Posterior vena cava (tissue), 2 donors: ENCODE measurements at regions of chr1 and their contacts with region 1.

Region 1: GRCh38 chr1:17236779-17237560 is 11.9 kb upstream of the PADI3 start:
- DNase-seq: peak; percentile 96

Region 2: DNA sequence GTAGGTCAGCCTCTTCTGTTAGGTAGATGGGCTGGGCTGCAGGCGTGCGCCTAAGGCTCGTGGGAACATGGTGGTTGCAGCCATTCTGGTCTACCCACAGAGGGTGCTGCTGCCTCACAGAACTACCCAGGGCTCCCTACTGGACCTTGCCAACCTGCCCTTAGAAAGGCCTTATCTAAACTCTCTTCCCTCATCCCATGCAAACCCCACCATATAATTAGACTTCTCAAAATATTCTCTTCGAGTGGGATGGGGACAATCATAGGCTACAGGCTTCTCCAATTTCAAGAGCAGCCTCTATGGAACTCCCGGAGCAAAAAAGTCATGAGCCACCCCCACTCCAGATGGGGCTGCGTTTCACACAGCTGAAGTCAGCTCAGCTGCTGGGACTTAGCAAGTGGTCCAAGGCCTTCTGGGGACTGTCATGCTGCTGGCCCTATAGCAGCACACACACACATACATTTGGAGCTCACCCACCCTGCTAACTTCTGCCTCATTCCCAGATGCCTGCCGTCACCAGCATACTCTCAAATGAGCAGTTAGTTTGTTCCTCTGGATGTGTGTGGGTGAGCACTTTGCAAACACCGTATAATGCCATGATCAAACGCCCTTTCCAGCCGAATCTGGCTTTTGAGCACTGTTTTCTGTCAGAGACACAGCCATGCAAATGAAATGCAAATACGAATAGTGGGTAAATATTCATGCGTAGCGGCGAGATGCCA is 177.1 kb before region 1 on chr1:
- intact Hi-C with region 1: loop called (anchors 5 kb)
- DNase-seq: no peak

Region 3: GRCh38 chr1:17070163-17070525 is 166.8 kb before region 1 on chr1:
- intact Hi-C with region 1: loop called in 1 of 2 experiments (anchors 5 kb)
- DNase-seq: no peak

Region 4: GRCh38 chr1:17125756-17126237 is 111.2 kb before region 1 on chr1:
- intact Hi-C with region 1: loop called (anchors 2 kb)
- DNase-seq: peak; percentile 97

Region 5: DNA sequence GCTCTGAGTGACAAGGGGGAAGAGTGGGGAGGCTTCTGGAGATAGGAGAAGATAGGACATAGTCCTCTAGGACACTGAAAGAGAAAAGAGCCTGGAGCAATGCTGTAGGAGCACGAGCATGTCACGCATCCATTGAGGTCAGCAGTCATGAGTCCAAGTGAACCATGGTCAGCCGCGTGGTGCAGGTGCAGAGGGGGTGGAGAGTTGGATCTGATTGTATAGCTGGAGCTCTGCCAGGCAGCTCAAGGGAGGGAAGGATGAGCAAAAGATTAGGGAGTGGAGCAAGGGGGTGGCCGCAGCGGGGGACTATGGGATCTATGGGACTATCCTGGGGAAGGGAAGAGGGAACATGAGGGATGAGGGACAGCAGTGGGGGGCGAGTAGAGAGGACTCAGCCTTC is 18.0 kb before region 1 on chr1:
- intact Hi-C with region 1: no loop called
- DNase-seq: no peak